ENCODE measurements at regions of chr7 and their contacts with region 1.

Region 1: DNA sequence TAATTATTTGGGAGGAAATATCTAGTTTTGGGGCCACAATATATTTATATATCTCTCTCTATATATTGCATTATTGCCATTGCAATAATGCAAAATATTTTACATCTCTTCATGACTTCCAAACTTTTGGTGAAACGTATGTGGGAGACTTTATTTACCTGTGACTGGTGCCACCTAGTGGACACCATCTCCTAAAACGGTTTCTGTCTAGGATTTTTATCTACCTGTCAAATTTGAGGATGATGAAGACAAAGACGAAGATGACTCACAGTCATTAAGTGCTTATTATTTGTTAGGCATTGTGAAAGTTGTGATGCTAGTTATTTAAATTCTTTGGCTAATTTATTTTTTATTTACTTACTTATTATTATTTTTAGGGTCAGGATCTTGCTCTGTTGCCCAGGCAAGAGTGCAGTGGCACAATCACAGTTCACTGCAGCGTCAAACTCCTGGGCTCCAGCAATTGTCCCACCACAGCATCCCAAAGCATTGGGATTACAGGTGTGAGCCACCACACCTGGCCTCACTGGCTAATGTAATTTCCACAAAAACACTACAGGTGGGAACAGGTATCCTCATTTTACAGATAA is 18.7 kb upstream of the CBLL1 start:
- DNase-seq: peak in 3 of 10 donors; percentile 42 to 56 (median 47)
- H3K4me3 ChIP-seq: no peak overlapping the region
- H3K27ac ChIP-seq: no peak overlapping the region
- H3K27me3 ChIP-seq: peaks cover 0 to 10% (median 0%) of the 10 kb centered on the region in 45 donors
- CTCF ChIP-seq: peak; percentile 66 to 88 (median 79)

Region 2: DNA sequence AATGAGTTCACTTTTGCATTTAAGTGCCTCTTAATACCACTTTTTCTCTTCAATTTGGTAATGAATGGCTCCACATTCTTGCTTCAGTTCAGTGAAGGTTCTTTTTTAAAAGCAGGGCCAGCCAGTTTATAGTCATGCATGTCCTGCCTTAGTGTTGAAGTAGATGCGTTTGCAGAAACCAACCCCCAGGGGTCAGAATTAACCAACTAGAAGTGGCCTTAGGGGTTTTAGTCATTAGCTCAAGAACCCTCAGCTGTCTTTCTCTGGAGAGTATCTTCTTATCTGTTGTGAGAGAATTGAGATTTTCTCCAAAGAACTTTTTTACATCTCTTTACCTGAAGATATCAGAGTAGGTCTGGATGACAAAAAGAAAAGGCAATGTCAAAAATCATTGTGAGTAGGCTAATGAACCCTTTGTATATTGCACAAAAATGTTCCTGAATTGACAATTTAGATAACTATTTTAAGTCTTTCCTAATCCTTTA is 778.0 kb before region 1 on chr7:
- intact Hi-C with region 1: loop called in 1 of 2 experiments (anchors 10 kb)
- DNase-seq: peak in 3 of 10 donors; percentile 39 to 63 (median 44)
- H3K4me3 ChIP-seq: no peak overlapping the region
- H3K27ac ChIP-seq: no peak overlapping the region
- H3K27me3 ChIP-seq: no peaks in the 10 kb centered on the region
- CTCF ChIP-seq: peak; percentile 26 to 79 (median 66)

Region 3: DNA sequence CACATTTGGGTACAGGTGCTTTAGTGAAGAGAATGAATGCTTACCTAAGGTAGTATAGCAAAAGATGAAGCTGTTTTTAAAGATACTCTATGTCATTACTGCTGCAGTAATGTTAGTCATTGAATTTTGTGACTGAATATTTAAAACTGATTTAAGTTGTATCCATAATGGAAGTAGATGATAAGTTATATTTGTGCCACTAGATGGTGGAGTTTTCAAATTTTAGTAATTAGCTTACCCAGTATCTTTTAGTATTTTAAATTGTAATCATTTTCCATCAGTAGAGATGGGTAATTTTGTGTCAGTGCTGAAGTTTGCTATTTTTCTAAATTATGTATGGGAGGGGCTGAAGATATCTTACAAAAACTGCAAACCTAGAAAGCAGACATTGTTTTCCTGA is 531.2 kb before region 1 on chr7:
- intact Hi-C with region 1: loop called (anchors 10 kb)
- DNase-seq: no peak
- H3K4me3 ChIP-seq: no peak overlapping the region
- H3K27ac ChIP-seq: peak overlapping the region in 25 of 59 donors; percentile 2 to 68 (median 34)
- H3K27me3 ChIP-seq: no peaks in the 10 kb centered on the region
- CTCF ChIP-seq: peak in 33 of 56 donors; percentile 5 to 47 (median 33)

Region 4: GRCh38 chr7:107462740-107463444 is 262.4 kb before region 1 on chr7:
- intact Hi-C with region 1: loop called (anchors 2 to 5 kb)
- DNase-seq: peak in 9 of 10 donors; percentile 38 to 69 (median 59)
- H3K4me3 ChIP-seq: no peak overlapping the region
- H3K27ac ChIP-seq: peak overlapping the region in 14 of 59 donors; percentile 1 to 63 (median 32)
- H3K27me3 ChIP-seq: no peaks in the 10 kb centered on the region
- CTCF ChIP-seq: peak; percentile 34 to 89 (median 72)

Region 5: DNA sequence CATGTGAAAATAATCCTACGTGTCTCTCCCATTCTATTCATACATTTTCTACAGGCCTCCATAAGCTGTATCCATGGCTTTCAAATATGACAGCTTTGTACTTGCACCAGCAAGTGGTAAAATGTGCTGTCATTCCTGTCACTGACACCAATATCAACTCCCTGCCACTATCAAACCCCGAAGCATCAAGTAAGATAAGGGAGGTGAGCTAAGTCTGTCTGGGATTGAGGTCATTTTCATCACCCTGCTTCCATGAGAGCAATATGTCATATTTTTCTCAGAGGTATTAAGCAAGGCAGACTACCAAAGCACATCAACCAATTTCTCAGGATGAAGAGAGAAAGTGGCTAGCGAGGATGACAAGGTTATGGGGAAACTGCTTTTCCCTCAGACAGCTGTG is 244.3 kb before region 1 on chr7:
- intact Hi-C with region 1: no loop called
- DNase-seq: no peak
- H3K4me3 ChIP-seq: no peak overlapping the region
- H3K27ac ChIP-seq: no peak overlapping the region
- H3K27me3 ChIP-seq: no peaks in the 10 kb centered on the region
- CTCF ChIP-seq: no peak

Region 6: GRCh38 chr7:107579885-107580715 is 145.1 kb before region 1 on chr7 and contains the start of gene BCAP29:
- intact Hi-C with region 1: loop called in 1 of 2 experiments (anchors 10 kb)
- DNase-seq: peak; percentile 38 to 78 (median 56)
- H3K4me3 ChIP-seq: peak within 1 kb of the TSS; percentile 62 to 98 (median 84)
- H3K27ac ChIP-seq: peak within 1 kb of the TSS; percentile 63 to 96 (median 86)
- H3K27me3 ChIP-seq: no peaks in the 10 kb centered on the region
- CTCF ChIP-seq: peak in 40 of 56 donors; percentile 10 to 57 (median 36)
- total RNA-seq, gene BCAP29: 61.4 to 148 (median 112) TPM

Region 7: DNA sequence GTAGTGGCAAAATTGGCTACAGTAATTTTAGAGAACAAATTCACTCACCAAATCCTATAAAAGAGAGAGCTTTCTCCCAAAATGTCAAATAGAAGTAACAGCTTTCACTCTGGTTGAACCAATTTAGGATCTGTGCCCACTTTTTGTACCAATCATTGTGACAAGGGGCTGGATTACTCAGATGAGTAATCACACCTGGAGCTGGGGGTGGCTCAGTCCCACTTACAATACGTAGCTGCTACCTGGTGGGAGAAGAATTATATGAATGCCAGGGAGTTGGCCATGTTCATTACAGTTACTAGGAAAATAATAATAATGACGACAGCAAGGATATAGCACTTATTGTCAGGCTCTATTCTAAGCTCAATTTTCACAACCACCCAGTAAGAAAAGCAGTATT is 101.2 kb after region 1 on chr7:
- intact Hi-C with region 1: no loop called
- DNase-seq: no peak
- H3K4me3 ChIP-seq: no peak overlapping the region
- H3K27ac ChIP-seq: no peak overlapping the region
- H3K27me3 ChIP-seq: peaks cover 0 to 4% (median 0%) of the 10 kb centered on the region in 45 donors
- CTCF ChIP-seq: no peak